ENCODE measurements at regions of chr1 and their contacts with region 1.

Region 1: GRCh38 chr1:101835988-101836387 is 160.7 kb downstream of the OLFM3 start:
- DNase-seq: no peak
- H3K4me3 Mint-ChIP-seq: no peak overlapping the region
- H3K27ac Mint-ChIP-seq: no peak overlapping the region
- H3K4me1 Mint-ChIP-seq: no peaks in the 10 kb centered on the region
- H3K27me3 Mint-ChIP-seq: no peaks in the 10 kb centered on the region

Region 2: GRCh38 chr1:101757985-101758384 is 78.0 kb before region 1 on chr1:
- intact Hi-C with region 1: loop called (anchors 2 kb)
- DNase-seq: no peak
- H3K4me3 Mint-ChIP-seq: no peak overlapping the region
- H3K27ac Mint-ChIP-seq: no peak overlapping the region
- H3K4me1 Mint-ChIP-seq: no peaks in the 10 kb centered on the region
- H3K27me3 Mint-ChIP-seq: peaks cover 2% of the 10 kb centered on the region

Measured in activated T-helper 1 cell treated with anti-CD3 and anti-CD28 coated beads, Interleukin-12 subunit alpha, Interleukin-12 subunit beta, Interleukin-2, Interleukin-4 antibody, amounts not matched to agents 30 ng/mL and 10 ng/mL and 1 ng/mL, durations not matched to agents 14 hours and 24 hours and 36 hours (primary cell).